ENCODE measurements at regions of chr16 and their contacts with region 1.

Region 1: DNA sequence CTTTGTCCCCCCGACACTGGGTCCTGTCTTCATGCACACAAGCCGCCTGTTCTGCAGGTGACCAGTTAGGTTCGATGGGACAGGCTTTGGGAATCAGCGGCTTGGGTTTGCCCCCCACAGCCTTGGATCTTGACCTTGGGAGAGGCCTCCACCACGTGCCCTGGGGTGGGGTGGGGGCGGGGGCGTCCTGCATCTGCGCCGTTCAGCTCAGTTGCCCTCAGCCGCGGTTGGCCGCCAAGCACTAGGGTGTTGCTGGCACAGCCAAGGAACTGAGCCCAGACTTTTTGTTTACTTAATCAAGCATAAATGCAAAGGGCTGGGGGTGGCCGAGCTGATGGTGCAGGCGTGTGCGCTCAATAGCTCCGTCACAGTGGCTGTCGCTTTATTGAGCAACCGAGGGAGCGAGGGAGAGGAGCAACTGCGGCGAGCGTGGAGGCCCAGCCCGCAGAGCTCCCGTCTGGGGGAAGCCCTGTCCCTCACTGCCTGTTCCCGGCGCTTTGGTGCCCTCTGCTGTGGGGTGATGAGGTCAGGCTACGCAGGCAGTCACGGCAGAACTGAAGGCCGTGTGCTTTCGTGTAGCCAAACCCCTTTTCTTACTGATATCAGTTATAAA is 33.9 kb downstream of the JPH3 start:
- DNase-seq: peak; percentile 61 to 84
- H3K4me3 ChIP-seq: peak overlapping the region; percentile 37; the same call in 1 of the 2 replicates
- H3K27ac ChIP-seq: no peak overlapping the region
- H3K4me1 ChIP-seq: no peaks in the 10 kb centered on the region; the same call in 1 of the 2 replicates
- H3K27me3 ChIP-seq: peaks cover 90% of the 10 kb centered on the region
- CTCF ChIP-seq: peak; percentile 67

Region 2: DNA sequence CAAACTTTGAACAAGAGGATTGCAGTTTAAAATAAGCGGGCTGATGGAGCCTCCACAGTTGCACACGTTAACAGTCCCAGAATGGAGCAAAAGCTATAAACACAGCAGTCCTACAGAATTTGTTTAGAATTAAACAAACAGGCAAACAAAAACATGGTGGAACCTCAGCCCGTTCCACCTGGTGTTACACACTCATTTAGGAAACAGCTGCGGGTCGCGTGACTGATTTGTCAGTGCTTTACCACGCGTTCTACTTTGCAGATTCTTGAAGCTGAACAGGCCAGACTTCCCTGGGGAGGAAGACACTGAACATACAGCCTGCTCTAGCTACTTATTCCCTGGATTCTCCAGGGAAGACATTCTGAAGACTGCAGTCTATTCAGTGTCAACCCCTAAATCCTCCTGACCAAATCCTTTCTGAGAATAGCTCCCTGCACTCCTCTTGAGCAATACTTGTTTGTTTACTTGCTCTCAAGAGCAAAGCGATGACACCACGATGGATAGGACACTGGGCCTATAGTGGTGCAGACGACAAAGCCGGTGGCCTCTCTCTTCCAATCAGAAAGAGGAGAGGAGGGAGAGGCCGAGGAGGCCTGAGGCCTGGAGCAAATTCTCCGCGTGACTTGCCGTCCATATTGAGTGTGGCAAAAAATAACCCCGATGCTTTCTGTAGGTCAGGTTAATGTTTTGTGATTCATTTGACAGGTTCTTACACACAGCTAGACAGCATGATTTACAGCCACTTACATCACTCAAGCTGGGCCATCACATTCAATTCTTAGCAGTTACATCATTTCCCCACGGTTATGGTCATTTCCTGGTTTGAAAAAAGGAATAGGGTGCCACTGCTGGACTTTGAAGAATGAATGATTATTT is 248.0 kb before region 1 on chr16:
- CTCF ChIA-PET with region 1: interaction called, 3 read pairs
- POLR2A ChIA-PET with region 1: no interaction called
- intact Hi-C with region 1: loop called (anchors 1 kb)
- DNase-seq: peak; percentile 87 to 99
- H3K4me3 ChIP-seq: peak overlapping the region; percentile 45; the same call in 1 of the 2 replicates
- H3K27ac ChIP-seq: peak overlapping the region; percentile 83
- H3K4me1 ChIP-seq: peaks cover 34% of the 10 kb centered on the region
- H3K27me3 ChIP-seq: no peaks in the 10 kb centered on the region
- CTCF ChIP-seq: no peak

Region 3: GRCh38 chr16:87416826-87417527 is 219.2 kb before region 1 on chr16:
- CTCF ChIA-PET with region 1: interaction called, 13 read pairs
- POLR2A ChIA-PET with region 1: no interaction called
- intact Hi-C with region 1: loop called (anchors 1 kb)
- DNase-seq: peak; percentile 26 to 40
- H3K4me3 ChIP-seq: no peak overlapping the region
- H3K27ac ChIP-seq: no peak overlapping the region
- H3K4me1 ChIP-seq: no peaks in the 10 kb centered on the region
- H3K27me3 ChIP-seq: no peaks in the 10 kb centered on the region
- CTCF ChIP-seq: peak; percentile 78

Region 4: GRCh38 chr16:87507351-87508069 is 128.7 kb before region 1 on chr16:
- CTCF ChIA-PET with region 1: interaction called, 12 read pairs
- POLR2A ChIA-PET with region 1: no interaction called
- intact Hi-C with region 1: no loop called
- DNase-seq: no peak
- H3K4me3 ChIP-seq: no peak overlapping the region
- H3K27ac ChIP-seq: no peak overlapping the region
- H3K4me1 ChIP-seq: no peaks in the 10 kb centered on the region
- H3K27me3 ChIP-seq: peaks cover 26% of the 10 kb centered on the region; the same call in 1 of the 2 replicates
- CTCF ChIP-seq: no peak

Region 5: GRCh38 chr16:87583453-87584131 is 52.6 kb before region 1 on chr16:
- CTCF ChIA-PET with region 1: interaction called, 5 read pairs
- POLR2A ChIA-PET with region 1: no interaction called
- intact Hi-C with region 1: loop called (anchors 1 kb)
- DNase-seq: no peak
- H3K4me3 ChIP-seq: no peak overlapping the region
- H3K27ac ChIP-seq: no peak overlapping the region
- H3K4me1 ChIP-seq: peaks cover 17% of the 10 kb centered on the region
- H3K27me3 ChIP-seq: peaks cover 25% of the 10 kb centered on the region
- CTCF ChIP-seq: no peak

Measured in PC-9 (cell line).